Activated CD8-positive, alpha-beta memory T cell treated with anti-CD3 and anti-CD28 coated beads, Interleukin-2, amount 10 ng/mL, durations not matched to agents 7 days and 5 days (primary cell): ENCODE measurements at regions of chr7 and their contacts with region 1.

Region 1: DNA sequence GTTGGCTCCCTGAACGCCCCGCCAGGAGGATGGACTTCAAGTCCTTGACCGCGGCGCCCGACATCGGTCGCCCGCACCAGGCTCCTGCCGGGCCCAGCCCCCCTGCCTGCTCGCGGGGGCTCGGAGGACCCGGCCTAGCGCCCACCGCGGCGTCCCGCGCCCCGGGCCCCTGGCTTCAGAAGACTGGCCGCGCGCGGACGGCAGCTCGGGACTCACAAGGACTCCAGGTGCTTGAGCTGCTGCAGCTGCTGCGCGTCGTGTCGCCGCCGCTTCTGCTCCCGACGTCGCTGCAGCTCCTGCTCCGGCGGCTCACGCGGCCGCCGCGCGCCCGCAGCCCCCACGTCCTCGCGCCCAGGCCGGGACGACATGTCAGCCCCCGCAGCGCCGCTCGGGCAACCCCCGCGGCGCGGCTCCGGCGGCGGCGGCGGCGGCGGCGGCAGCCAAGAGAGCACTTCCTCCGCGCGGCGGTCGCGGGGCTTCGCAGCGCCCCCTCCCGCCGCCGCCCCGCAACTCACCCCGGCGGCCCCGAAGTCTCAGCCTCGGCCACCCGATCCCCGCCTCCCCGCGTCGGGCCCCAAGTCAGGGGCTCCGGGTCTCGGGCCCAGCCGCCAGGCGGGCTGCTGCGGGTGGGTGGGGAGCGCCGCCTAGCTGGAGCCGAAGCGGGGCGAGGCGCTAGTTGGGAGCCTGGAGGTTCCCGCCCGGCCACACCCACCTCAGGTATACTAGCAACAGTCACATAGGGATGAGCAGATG is at the start of gene RP9:
- DNase-seq: peak; percentile 79
- ATAC-seq: peak; percentile 91
- H3K4me3 Mint-ChIP-seq: peak within 1 kb of the TSS; percentile 91
- H3K27ac Mint-ChIP-seq: peak within 1 kb of the TSS; percentile 79
- H3K4me1 Mint-ChIP-seq: peaks cover 27% of the 10 kb centered on the region
- H3K27me3 Mint-ChIP-seq: peaks cover 21% of the 10 kb centered on the region
- total RNA-seq, gene RP9: 11.3 to 11.5 TPM

Region 2: GRCh38 chr7:32891800-32892520 is 217.2 kb before region 1 on chr7:
- CTCF ChIA-PET with region 1: interaction called, 13 read pairs
- DNase-seq: peak; percentile 98
- ATAC-seq: peak; percentile 66
- H3K4me3 Mint-ChIP-seq: peak overlapping the region; percentile 78
- H3K27ac Mint-ChIP-seq: peak overlapping the region; percentile 92
- H3K4me1 Mint-ChIP-seq: peaks cover 46% of the 10 kb centered on the region
- H3K27me3 Mint-ChIP-seq: no peaks in the 10 kb centered on the region

Region 3: GRCh38 chr7:32905175-32905662 is 204.0 kb before region 1 on chr7:
- CTCF ChIA-PET with region 1: interaction called, 12 read pairs
- DNase-seq: peak; percentile 95
- ATAC-seq: peak; percentile 94
- H3K4me3 Mint-ChIP-seq: peak overlapping the region; percentile 75
- H3K27ac Mint-ChIP-seq: peak overlapping the region; percentile 96
- H3K4me1 Mint-ChIP-seq: peaks cover 18% of the 10 kb centered on the region
- H3K27me3 Mint-ChIP-seq: no peaks in the 10 kb centered on the region

Region 4: DNA sequence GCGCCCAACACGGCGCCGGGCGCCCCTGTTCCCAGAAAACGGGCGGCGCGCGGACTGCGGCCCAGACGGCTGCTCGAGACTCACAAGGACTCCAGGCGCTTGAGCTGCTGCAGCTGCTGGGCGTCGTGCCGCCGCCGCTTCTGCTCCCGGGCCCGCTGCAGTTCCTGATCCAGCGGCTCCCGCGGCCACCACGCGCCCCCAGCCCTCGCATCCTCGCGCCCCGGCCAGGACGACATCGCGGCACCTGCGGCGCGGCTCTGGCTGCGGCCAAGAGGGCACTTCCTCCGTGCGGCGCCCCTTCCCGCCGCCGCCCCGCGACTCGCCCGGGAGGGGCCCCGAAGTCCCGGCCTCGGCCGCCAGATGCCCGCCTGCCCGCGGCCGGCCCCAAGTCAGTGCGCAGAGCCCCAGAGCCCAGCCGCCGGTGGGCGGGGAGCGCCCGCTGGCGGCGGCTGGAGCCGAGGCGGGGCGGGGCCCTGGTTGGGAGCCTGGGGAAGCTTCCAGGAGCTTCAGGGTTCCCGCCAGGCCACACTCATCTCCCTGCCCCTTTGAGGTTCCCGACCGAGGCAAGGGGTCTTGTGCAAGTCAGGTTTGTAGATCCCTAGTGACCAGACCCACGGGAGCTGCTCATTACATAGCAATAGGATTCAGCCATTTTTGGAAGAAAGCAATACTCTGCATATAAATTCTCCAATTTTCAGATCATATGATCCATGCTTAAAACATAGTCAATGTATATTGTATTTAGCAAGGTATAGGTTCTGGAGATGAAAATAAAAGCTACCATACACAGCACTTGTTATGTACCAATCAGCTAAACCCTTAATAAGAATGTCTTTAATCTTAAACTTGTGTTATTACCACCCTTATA is 166.2 kb before region 1 on chr7:
- CTCF ChIA-PET with region 1: interaction called, 10 read pairs
- DNase-seq: peak; percentile 71
- ATAC-seq: peak; percentile 89
- H3K4me3 Mint-ChIP-seq: peak overlapping the region; percentile 82
- H3K27ac Mint-ChIP-seq: no peak overlapping the region
- H3K4me1 Mint-ChIP-seq: peaks cover 22% of the 10 kb centered on the region
- H3K27me3 Mint-ChIP-seq: peaks cover 25% of the 10 kb centered on the region

Region 5: DNA sequence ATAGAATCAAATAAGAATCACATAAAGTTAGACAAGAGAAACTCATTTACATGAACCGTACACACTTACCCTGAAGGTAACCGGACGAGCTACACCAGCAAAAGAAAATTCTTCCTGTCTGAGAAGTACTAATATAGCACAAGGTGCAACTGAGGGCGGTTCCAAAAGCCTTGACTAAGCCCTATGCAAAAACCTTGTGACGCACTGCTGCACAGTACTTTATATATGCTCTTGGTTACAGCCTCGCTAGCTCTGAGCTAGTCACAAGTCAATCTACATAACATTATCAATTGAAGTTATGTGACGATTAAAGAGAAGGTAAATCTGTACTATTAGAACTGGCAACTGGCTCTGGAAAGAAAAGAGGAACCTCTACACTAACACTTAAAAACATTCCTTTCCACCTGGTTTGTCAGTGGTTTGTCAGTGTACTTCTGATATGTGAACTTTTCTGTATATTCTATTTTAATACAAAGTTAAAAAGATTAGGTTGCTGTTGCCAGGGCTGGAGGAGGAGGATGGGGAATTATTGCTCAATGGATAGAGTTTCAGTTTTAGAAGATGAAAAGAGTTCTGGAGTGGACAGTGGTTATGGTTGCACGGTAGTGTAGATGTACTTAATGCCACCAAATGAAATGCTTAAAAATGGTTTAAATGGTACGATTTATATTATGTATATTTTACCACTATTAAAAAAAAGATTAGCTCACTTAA is 68.2 kb before region 1 on chr7:
- CTCF ChIA-PET with region 1: interaction called, 22 read pairs
- DNase-seq: peak; percentile 84
- ATAC-seq: peak; percentile 98
- H3K4me3 Mint-ChIP-seq: peak overlapping the region; percentile 80
- H3K27ac Mint-ChIP-seq: peak overlapping the region; percentile 83
- H3K4me1 Mint-ChIP-seq: peaks cover 42% of the 10 kb centered on the region
- H3K27me3 Mint-ChIP-seq: no peaks in the 10 kb centered on the region

Region 6: GRCh38 chr7:33062782-33063443 is 46.3 kb before region 1 on chr7:
- CTCF ChIA-PET with region 1: interaction called, 34 read pairs
- DNase-seq: peak; percentile 96
- ATAC-seq: peak; percentile 94
- H3K4me3 Mint-ChIP-seq: peak overlapping the region; percentile 96
- H3K27ac Mint-ChIP-seq: peak overlapping the region; percentile 86
- H3K4me1 Mint-ChIP-seq: peaks cover 34% of the 10 kb centered on the region
- H3K27me3 Mint-ChIP-seq: peaks cover 8% of the 10 kb centered on the region

Region 7: GRCh38 chr7:33128990-33129805 is 20.0 kb after region 1 on chr7 and contains the start of gene BBS9:
- CTCF ChIA-PET with region 1: interaction called, 25 read pairs
- DNase-seq: peak; percentile 96
- ATAC-seq: peak; percentile 98
- H3K4me3 Mint-ChIP-seq: peak within 1 kb of the TSS; percentile 96
- H3K27ac Mint-ChIP-seq: peak within 1 kb of the TSS; percentile 83
- H3K4me1 Mint-ChIP-seq: peaks cover 18% of the 10 kb centered on the region
- H3K27me3 Mint-ChIP-seq: no peaks in the 10 kb centered on the region
- total RNA-seq, gene BBS9: 9.8 to 10.2 TPM

Region 8: DNA sequence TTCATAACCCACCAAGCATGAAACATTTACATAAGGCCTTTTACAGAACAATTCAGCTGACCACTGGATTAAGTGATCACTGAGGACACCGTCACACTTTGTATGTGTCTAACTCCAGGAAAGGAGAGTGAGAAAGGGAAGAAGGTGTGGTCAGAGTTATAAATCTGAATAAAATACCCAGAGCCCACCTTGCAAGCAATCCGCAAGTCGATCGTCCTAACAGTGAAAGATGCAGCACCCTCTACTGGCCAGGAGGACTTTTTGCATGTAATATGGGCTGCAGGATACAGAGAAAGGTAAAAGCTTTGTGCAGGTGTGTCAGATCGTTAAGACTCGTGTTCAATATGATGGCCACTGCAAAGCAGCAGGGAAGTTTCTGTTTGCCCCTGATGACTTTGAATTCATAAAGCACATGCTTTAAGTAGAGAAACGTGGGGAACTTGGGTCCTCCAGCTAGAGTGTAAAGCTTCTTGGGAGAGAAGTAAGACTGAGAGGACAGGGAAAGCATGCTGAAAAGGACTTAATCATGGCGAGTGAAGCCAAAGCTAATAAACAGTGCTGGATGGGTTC is 727.7 kb after region 1 on chr7:
- CTCF ChIA-PET with region 1: no interaction called
- DNase-seq: no peak
- ATAC-seq: no peak
- H3K4me3 Mint-ChIP-seq: no peak overlapping the region
- H3K27ac Mint-ChIP-seq: no peak overlapping the region
- H3K4me1 Mint-ChIP-seq: no peaks in the 10 kb centered on the region
- H3K27me3 Mint-ChIP-seq: no peaks in the 10 kb centered on the region